ENCODE measurements at regions of chr3 and their contacts with region 1.

Region 1: GRCh38 chr3:126259411-126260391 is 79.3 kb upstream of the ALDH1L1 start:
- DNase-seq: peak; percentile 36 to 91
- H3K4me3 ChIP-seq: peak overlapping the region in 1 of 2 donors; percentile 40
- H3K27ac ChIP-seq: peak overlapping the region; percentile 55 to 72
- H3K4me1 ChIP-seq: peaks cover 4 to 11% of the 10 kb centered on the region in 2 donors
- H3K27me3 ChIP-seq: no peaks in the 10 kb centered on the region
- CTCF ChIP-seq: peak; percentile 84 to 85 (median 85)

Region 2: GRCh38 chr3:126134219-126134975 is 125.3 kb before region 1 on chr3:
- intact Hi-C with region 1: loop called (anchors 5 kb)
- DNase-seq: peak in 1 of 2 donors; percentile 80
- H3K4me3 ChIP-seq: no peak overlapping the region
- H3K27ac ChIP-seq: no peak overlapping the region
- H3K4me1 ChIP-seq: no peaks in the 10 kb centered on the region
- H3K27me3 ChIP-seq: no peaks in the 10 kb centered on the region
- CTCF ChIP-seq: peak; percentile 80 to 87 (median 81)

Region 3: GRCh38 chr3:126197854-126198584 is 61.7 kb before region 1 on chr3:
- intact Hi-C with region 1: loop called (anchors 1 kb)
- DNase-seq: peak in 1 of 2 donors; percentile 90
- H3K4me3 ChIP-seq: no peak overlapping the region
- H3K27ac ChIP-seq: no peak overlapping the region
- H3K4me1 ChIP-seq: peaks cover 0 to 3% of the 10 kb centered on the region in 2 donors
- H3K27me3 ChIP-seq: no peaks in the 10 kb centered on the region
- CTCF ChIP-seq: peak; percentile 61 to 81 (median 76)

Measured in ascending aorta (tissue), 2 donors.